Activated CD4-positive, alpha-beta T cell treated with anti-CD3 and anti-CD28 coated beads for 36 hours (primary cell): ENCODE measurements at regions of chr18 and their contacts with region 1.

Region 1: GRCh38 chr18:47263430-47264307 is 12.2 kb upstream of the SKOR2 start:
- DNase-seq: peak; percentile 27
- ATAC-seq: peak; percentile 26
- H3K4me3 Mint-ChIP-seq: no peak overlapping the region
- H3K27ac Mint-ChIP-seq: no peak overlapping the region
- H3K4me1 Mint-ChIP-seq: peaks cover 6% of the 10 kb centered on the region
- H3K27me3 Mint-ChIP-seq: peaks cover 69% of the 10 kb centered on the region

Region 2: DNA sequence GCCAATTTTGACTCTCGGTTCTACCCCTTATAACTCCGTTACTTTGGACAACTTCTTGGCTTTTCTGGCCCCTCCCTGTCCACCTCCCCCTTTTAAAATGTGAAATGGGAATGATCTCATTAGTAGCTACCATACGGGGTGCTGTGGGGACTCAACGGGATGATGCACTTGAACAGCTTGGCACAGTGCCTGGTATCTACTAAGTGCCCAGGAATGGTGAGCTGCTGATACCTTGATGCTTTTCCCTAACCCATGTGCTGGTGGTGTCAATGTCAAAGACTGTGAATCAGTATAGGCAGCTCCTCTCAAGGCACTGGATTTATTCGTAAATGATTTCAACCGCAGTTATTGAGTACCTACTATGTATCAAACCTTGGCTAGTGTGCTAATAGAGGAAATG is 810.8 kb before region 1 on chr18:
- CTCF ChIA-PET with region 1: no interaction called
- POLR2A ChIA-PET with region 1: no interaction called
- intact Hi-C with region 1: no loop called
- DNase-seq: no peak
- ATAC-seq: no peak
- H3K4me3 Mint-ChIP-seq: no peak overlapping the region
- H3K27ac Mint-ChIP-seq: no peak overlapping the region
- H3K4me1 Mint-ChIP-seq: no peaks in the 10 kb centered on the region
- H3K27me3 Mint-ChIP-seq: no peaks in the 10 kb centered on the region

Region 3: GRCh38 chr18:47247036-47247832 is 16.4 kb before region 1 on chr18:
- CTCF ChIA-PET with region 1: interaction called, 7 read pairs
- POLR2A ChIA-PET with region 1: no interaction called
- intact Hi-C with region 1: loop called (anchors 2 kb)
- DNase-seq: peak; percentile 34
- ATAC-seq: no peak
- H3K4me3 Mint-ChIP-seq: no peak overlapping the region
- H3K27ac Mint-ChIP-seq: no peak overlapping the region
- H3K4me1 Mint-ChIP-seq: peaks cover 14% of the 10 kb centered on the region
- H3K27me3 Mint-ChIP-seq: peaks cover 66% of the 10 kb centered on the region

Region 4: DNA sequence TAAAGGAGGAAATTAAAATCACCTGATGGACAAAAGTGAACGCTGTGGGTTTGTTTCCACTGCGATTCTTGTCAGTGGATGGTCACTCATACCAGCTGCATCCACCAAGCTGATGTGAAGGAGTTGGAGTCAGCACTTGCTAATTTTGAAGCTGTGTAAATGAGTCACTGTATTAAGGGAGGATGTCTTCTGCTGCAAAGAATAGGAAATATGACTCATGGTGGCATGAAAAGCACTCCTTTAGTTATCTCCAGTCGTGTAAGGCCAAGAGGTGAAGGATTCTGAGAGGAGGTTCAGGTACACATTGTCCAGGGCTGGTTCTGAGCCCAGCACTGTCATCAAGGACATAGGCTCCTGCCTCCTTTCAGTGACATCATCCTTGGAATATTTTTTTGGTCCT is 59.5 kb after region 1 on chr18:
- CTCF ChIA-PET with region 1: no interaction called
- POLR2A ChIA-PET with region 1: no interaction called
- intact Hi-C with region 1: no loop called
- DNase-seq: no peak
- ATAC-seq: peak; percentile 84
- H3K4me3 Mint-ChIP-seq: no peak overlapping the region
- H3K27ac Mint-ChIP-seq: no peak overlapping the region
- H3K4me1 Mint-ChIP-seq: no peaks in the 10 kb centered on the region
- H3K27me3 Mint-ChIP-seq: peaks cover 5% of the 10 kb centered on the region